Activated CD4-positive, alpha-beta T cell treated with anti-CD3 and anti-CD28 coated beads for 36 hours (primary cell): ENCODE measurements at regions of chr6 and their contacts with region 1.

Region 1: GRCh38 chr6:2940010-2940850 is 31.1 kb downstream of the SERPINB6 start:
- DNase-seq: peak; percentile 92
- ATAC-seq: peak; percentile 84
- H3K4me3 Mint-ChIP-seq: peak overlapping the region; percentile 50
- H3K27ac Mint-ChIP-seq: peak overlapping the region; percentile 94
- H3K4me1 Mint-ChIP-seq: peaks cover 67% of the 10 kb centered on the region
- H3K27me3 Mint-ChIP-seq: no peaks in the 10 kb centered on the region

Region 2: GRCh38 chr6:2563635-2564034 is 376.6 kb before region 1 on chr6:
- CTCF ChIA-PET with region 1: no interaction called
- POLR2A ChIA-PET with region 1: no interaction called
- intact Hi-C with region 1: no loop called
- DNase-seq: peak; percentile 44
- ATAC-seq: peak; percentile 98
- H3K4me3 Mint-ChIP-seq: no peak overlapping the region
- H3K27ac Mint-ChIP-seq: no peak overlapping the region
- H3K4me1 Mint-ChIP-seq: peaks cover 10% of the 10 kb centered on the region
- H3K27me3 Mint-ChIP-seq: peaks cover 47% of the 10 kb centered on the region

Region 3: DNA sequence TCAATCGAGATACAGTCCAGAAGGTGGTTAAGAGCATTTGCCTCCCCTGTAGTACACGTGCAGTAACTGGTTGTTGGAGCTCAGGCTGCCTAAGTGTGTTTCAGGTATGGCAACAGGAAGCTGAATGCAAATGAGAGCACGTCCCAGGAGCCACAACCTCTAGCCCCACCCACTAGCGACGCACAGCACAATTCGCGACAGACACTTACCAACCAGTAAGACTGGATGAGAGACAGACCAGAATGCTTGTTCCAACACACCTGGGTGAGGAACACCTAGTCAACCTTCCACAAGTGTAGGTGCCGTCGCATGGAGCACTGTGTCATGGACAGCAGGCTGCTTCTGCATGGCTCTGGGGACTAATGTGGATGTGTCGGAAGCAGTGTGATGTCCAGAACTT is 91.4 kb before region 1 on chr6:
- CTCF ChIA-PET with region 1: interaction called, 165 read pairs
- POLR2A ChIA-PET with region 1: interaction called, 13 read pairs
- intact Hi-C with region 1: loop called (anchors 1 kb)
- DNase-seq: peak; percentile 86
- ATAC-seq: peak; percentile 69
- H3K4me3 Mint-ChIP-seq: peak overlapping the region; percentile 58
- H3K27ac Mint-ChIP-seq: peak overlapping the region; percentile 88
- H3K4me1 Mint-ChIP-seq: peaks cover 59% of the 10 kb centered on the region
- H3K27me3 Mint-ChIP-seq: no peaks in the 10 kb centered on the region

Region 4: DNA sequence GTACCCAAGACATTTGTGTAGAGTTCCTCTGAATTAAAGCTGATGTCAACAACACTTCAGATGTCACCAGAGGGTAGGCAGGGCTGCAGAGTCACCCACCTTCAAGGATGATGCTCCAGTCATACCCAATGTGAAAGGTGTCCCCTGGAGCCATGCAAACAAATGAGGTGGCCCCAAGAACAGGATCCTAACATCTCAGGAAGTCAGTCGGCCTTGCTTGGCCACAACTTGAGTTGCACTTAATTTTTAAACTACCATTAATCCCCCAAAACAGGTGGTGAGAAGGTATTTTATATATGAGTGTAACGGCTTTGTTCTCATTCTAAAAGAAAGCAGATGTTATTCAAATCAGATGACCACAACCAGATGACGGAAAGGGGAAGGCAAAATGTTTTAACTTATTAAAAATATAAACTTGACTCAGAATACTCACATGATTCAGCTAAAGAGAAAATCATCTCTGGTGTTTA is 77.5 kb before region 1 on chr6:
- CTCF ChIA-PET with region 1: interaction called, 5 read pairs
- POLR2A ChIA-PET with region 1: interaction called, 35 read pairs
- intact Hi-C with region 1: loop called (anchors 1 kb)
- DNase-seq: peak; percentile 77
- ATAC-seq: peak; percentile 54
- H3K4me3 Mint-ChIP-seq: peak overlapping the region; percentile 66
- H3K27ac Mint-ChIP-seq: peak overlapping the region; percentile 99
- H3K4me1 Mint-ChIP-seq: peaks cover 80% of the 10 kb centered on the region
- H3K27me3 Mint-ChIP-seq: no peaks in the 10 kb centered on the region

Region 5: GRCh38 chr6:2900821-2901644 is 39.2 kb before region 1 on chr6:
- CTCF ChIA-PET with region 1: interaction called, 4 read pairs
- POLR2A ChIA-PET with region 1: interaction called, 14 read pairs
- intact Hi-C with region 1: loop called (anchors 1 to 2 kb)
- DNase-seq: peak; percentile 26
- ATAC-seq: no peak
- H3K4me3 Mint-ChIP-seq: peak overlapping the region; percentile 91
- H3K27ac Mint-ChIP-seq: peak overlapping the region; percentile 93
- H3K4me1 Mint-ChIP-seq: peaks cover 45% of the 10 kb centered on the region
- H3K27me3 Mint-ChIP-seq: no peaks in the 10 kb centered on the region

Region 6: DNA sequence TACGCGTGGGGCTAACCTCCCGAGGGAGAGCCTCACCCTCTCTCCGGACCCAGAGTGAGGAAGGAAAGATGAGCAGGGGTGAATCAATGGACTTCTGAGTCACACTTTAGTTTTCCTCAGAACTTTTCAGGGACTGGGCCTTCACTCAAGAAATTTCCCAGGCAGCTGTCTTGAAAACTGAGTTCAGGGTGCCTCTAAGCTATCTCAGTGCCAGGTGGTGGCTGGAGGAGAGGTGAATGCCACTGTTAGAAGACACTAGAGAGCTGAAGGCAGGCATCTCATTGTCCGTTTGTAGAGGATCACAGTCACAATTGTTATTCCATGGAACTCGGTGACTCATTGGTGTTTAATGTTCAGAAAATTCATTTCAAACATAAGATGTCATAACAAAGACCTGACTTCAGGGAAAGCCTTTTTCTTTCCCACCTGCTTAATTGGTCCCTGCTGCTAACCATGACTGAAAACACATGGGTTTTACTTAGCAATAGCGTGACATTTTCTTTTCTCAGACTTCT is 36.4 kb after region 1 on chr6:
- CTCF ChIA-PET with region 1: interaction called, 11 read pairs
- POLR2A ChIA-PET with region 1: interaction called, 13 read pairs
- intact Hi-C with region 1: loop called (anchors 1 to 2 kb)
- DNase-seq: peak; percentile 22
- ATAC-seq: peak; percentile 54
- H3K4me3 Mint-ChIP-seq: no peak overlapping the region
- H3K27ac Mint-ChIP-seq: peak overlapping the region; percentile 91
- H3K4me1 Mint-ChIP-seq: peaks cover 38% of the 10 kb centered on the region
- H3K27me3 Mint-ChIP-seq: peaks cover 29% of the 10 kb centered on the region

Region 7: GRCh38 chr6:3157131-3157927 is 217.1 kb after region 1 on chr6 and contains the start of gene TUBB2A:
- CTCF ChIA-PET with region 1: no interaction called
- POLR2A ChIA-PET with region 1: no interaction called
- intact Hi-C with region 1: no loop called
- DNase-seq: peak; percentile 87
- ATAC-seq: peak; percentile 68
- H3K4me3 Mint-ChIP-seq: peak within 1 kb of the TSS; percentile 74
- H3K27ac Mint-ChIP-seq: peak within 1 kb of the TSS; percentile 55
- H3K4me1 Mint-ChIP-seq: peaks cover 25% of the 10 kb centered on the region
- H3K27me3 Mint-ChIP-seq: peaks cover 20% of the 10 kb centered on the region
- total RNA-seq, gene TUBB2A: 1.7 to 1.8 TPM

Region 8: DNA sequence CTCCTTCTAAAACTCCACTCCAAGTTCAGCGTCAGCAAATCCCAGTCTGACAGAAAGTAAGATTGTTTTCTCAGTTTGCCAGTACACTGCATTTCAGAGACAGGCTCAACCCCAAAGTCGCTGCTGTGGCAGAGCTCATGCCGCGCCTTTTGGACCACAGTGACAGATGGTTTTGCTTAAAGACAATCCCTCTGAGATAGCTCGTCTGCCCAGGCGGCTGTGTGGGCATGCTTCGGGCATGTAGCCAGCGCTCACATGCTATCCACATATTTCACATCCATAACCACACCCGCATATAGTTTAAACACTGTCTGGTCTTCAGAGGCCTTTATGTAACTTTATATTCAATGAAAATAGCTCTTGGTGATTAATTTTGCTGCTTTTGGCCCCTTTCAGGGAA is 826.0 kb after region 1 on chr6:
- CTCF ChIA-PET with region 1: no interaction called
- POLR2A ChIA-PET with region 1: no interaction called
- intact Hi-C with region 1: no loop called
- DNase-seq: no peak
- ATAC-seq: no peak
- H3K4me3 Mint-ChIP-seq: no peak overlapping the region
- H3K27ac Mint-ChIP-seq: no peak overlapping the region
- H3K4me1 Mint-ChIP-seq: peaks cover 12% of the 10 kb centered on the region
- H3K27me3 Mint-ChIP-seq: peaks cover 24% of the 10 kb centered on the region